ENCODE measurements at regions of chr16 and their contacts with region 1.

Region 1: DNA sequence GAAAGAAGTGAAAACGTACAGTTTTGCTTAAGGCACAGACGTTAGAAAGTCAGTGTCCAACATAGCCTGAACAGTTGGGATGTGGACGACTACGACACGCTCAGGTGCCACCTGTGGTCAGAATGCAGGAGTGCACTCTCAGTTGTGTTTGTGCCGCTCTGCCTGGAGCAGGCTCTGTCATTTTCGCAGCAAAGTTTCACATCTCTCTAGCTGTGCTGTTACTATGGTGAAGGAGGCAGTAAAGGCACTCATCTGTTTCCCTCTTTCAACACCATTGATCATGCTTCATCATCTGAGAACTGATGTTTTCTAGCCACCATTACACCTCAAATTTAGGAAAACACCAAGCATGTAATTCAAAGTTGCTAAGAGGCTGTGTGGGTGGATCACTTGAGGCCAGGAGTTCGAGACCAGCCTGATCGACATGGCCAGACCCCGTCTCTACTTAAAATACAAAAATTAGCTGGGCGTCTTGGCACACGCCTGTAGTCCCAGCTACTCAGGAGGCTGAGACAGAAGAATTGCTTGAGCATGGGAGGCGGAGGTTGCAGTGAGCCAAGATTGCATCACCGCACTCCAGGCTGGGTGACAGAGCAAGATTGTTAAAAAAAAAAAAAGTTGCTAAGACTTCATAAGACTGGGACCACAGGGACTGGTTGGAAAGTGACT is 44.9 kb upstream of the DNAJA2 start:
- DNase-seq: peak; percentile 24
- H3K4me3 Mint-ChIP-seq: no peak overlapping the region
- H3K27ac Mint-ChIP-seq: no peak overlapping the region
- H3K4me1 Mint-ChIP-seq: peaks cover 23% of the 10 kb centered on the region
- H3K27me3 Mint-ChIP-seq: peaks cover 4% of the 10 kb centered on the region

Region 2: GRCh38 chr16:46947900-46948547 is 70.3 kb before region 1 on chr16:
- intact Hi-C with region 1: loop called (anchors 2 kb)
- DNase-seq: peak; percentile 19
- H3K4me3 Mint-ChIP-seq: no peak overlapping the region
- H3K27ac Mint-ChIP-seq: no peak overlapping the region
- H3K4me1 Mint-ChIP-seq: peaks cover 9% of the 10 kb centered on the region
- H3K27me3 Mint-ChIP-seq: peaks cover 2% of the 10 kb centered on the region

Region 3: DNA sequence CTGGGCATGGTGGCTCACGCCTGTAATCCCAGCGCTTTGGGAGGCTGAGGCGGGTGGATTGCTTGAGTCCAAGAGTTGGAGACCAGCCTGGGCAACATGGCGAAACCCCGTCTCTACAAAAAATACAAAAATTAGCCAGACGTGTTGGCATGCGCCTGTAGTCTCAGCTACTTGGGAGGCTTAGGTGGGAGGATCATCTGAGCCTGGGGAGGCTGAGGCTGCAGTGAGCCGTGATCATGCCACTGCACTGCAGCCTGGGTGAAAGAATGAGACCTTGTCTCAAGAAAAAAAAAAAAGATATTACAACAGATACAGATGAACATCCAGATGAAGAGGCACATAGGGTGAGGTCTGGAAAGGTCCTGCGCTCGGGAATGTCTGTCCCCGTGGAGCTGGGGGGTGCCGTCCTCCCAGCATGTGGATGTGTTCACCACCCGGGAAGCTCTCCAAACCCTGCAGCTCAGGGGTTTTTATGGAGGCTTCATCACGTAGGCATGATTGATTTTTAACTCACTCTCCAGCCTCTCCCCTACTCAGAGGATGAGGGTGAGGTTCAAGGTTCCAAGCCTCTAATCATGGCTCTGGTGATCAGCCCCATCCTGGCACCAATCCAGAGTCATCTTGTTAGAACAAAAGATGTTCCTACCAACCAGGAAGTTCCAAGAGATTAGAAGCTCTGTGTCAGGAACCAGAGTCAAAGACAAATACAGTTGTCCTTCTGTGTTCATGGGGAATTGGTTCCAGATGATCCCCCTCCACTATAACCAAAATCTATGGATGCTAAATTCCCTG is 40.1 kb after region 1 on chr16:
- intact Hi-C with region 1: no loop called
- DNase-seq: no peak
- H3K4me3 Mint-ChIP-seq: no peak overlapping the region
- H3K27ac Mint-ChIP-seq: no peak overlapping the region
- H3K4me1 Mint-ChIP-seq: no peaks in the 10 kb centered on the region
- H3K27me3 Mint-ChIP-seq: no peaks in the 10 kb centered on the region

Region 4: DNA sequence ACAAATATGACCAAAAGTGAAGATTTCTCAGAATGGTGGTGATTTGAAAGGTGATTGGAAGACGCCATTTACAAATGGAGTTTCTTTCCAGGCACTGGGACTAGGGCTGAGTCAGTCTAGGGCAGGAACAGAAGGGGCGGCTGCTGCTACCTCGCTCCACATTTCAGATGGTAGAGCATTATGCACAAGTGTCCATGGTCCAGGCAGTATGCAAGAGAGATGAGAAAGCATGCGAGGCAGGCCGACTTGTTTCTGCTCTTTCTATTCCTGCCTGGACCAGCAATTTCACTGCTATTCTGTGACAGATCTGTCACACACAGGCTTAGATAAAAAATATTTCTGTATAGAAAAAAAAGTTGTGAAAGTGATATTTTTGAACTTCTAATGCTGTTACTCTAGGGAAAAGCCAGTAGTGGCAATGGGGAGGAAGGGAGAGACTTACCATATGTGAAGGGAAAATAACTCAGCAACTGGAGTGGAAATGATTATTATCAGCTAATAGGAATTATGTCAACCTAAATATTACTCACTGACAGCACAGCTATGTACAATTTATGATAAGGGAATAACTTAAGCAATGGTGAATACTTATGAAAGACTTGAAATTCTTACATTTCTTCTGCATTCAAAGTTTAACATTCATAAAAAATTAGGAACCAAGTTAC is 260.1 kb after region 1 on chr16:
- intact Hi-C with region 1: no loop called
- DNase-seq: no peak
- H3K4me3 Mint-ChIP-seq: no peak overlapping the region
- H3K27ac Mint-ChIP-seq: no peak overlapping the region
- H3K4me1 Mint-ChIP-seq: no peaks in the 10 kb centered on the region
- H3K27me3 Mint-ChIP-seq: no peaks in the 10 kb centered on the region

Measured in activated T-helper 1 cell treated with anti-CD3 and anti-CD28 coated beads, Interleukin-12 subunit alpha, Interleukin-12 subunit beta, Interleukin-2, Interleukin-4 antibody, amounts not matched to agents 30 ng/mL and 10 ng/mL and 1 ng/mL, durations not matched to agents 14 hours and 24 hours and 36 hours (primary cell).